Left cardiac atrium (tissue), 4 donors: ENCODE measurements at regions of chr20 and their contacts with region 1.

Region 1: GRCh38 chr20:4014031-4014474 is 1.3 kb downstream of the RNF24 start:
- DNase-seq: no peak
- ATAC-seq: peak; percentile 16 to 50

Region 2: DNA sequence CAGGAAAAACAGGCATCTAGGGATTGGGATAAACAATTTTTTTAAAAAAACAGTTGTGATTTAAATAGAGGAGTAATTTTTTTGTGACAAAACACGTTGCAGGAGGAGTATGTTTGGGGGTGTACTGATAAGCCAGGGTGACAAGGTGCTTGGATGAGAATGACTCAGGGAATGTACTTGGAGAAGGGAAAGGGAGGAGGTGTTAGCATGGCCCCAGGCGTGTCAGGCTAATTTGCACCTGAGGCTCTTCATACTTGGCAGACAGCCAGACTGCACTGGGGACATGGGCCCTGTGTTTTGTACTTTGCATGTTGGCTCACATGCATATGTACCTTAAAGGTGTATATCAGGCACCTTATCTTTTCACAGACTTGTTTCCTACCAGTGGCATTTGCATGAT is 102.1 kb before region 1 on chr20:
- intact Hi-C with region 1: no loop called
- DNase-seq: no peak
- ATAC-seq: peak; percentile 31 to 52

Region 3: DNA sequence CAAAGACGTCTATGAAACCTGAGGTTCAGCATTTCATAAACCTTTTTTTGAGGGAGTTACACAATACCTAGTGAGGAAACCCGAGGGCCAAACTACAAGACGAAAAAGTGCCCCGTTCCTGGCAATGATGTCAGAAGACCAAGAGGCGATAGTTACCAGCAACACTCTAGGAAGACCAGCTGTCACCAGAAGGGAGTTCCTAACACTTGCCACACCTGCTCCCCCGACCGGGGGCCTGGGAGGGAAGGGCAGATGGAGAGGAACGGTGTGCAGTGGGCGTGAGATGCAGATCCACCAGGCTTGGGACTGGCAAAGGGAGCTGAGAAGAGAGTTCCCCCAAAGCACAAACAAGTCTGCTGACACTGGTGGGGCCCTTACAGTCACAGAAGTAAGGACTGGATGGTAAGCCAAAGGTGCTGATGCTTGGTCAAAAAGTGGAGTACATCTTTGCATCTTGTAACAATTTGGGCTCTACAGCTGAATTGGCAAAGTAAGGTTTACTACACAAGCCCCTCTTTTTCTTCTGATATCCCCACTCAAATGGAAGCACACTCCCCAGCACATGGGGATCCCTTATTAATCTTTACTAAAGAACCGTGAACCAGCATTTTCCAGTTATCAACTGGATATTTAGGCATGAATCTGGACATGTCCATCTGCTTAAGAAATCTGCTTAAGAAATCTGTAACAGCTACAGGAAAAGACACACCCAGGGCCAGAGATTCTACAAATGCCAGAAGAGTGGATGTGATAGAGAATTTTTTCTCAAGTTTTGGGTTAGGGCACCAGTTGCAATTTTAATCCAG is 86.4 kb before region 1 on chr20:
- intact Hi-C with region 1: no loop called
- DNase-seq: no peak
- ATAC-seq: peak; percentile 9 to 13

Region 4: GRCh38 chr20:4064144-4064909 is 50.3 kb after region 1 on chr20:
- intact Hi-C with region 1: loop called in 1 of 2 experiments (anchors 10 kb)
- DNase-seq: peak; percentile 92
- ATAC-seq: peak; percentile 90

Region 5: DNA sequence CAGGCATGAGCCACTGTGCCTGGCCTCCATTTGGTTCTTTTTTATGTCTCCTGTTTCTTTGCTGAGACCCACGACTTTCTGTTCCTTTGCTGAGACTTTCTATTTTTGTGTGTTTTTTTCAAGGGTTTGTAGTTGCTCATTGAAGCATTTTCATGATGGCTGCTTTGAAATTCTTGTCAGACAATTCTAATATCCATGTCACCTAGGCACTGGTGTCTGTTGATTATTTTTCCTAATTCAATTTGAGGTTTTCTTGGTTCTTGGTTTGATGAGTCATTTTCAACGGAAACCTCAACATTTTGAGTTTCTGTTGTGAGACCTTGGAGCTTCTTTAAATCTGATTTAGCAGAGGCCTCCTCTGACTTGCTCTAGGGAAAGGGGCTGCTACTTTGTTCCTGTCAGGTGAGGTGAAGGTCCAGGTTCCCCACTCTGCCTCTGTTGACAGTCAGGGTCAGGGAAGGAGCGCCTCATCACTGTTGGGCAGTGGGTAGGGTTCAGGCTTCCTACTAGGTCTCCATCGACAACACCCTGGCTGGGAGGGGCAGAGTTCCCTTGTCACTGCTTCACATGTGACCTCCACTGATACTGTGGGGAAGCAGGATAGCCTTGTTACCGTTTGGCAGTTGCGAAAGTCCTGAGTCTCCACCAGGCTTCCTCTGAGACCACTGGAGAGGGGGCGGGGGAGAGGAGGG is 68.5 kb after region 1 on chr20:
- intact Hi-C with region 1: loop called in 1 of 2 experiments (anchors 2 kb)
- DNase-seq: peak; percentile 70
- ATAC-seq: peak; percentile 42 to 64